GM12878 (cell line): ENCODE measurements at regions of chr1 and their contacts with region 1.

Region 1: DNA sequence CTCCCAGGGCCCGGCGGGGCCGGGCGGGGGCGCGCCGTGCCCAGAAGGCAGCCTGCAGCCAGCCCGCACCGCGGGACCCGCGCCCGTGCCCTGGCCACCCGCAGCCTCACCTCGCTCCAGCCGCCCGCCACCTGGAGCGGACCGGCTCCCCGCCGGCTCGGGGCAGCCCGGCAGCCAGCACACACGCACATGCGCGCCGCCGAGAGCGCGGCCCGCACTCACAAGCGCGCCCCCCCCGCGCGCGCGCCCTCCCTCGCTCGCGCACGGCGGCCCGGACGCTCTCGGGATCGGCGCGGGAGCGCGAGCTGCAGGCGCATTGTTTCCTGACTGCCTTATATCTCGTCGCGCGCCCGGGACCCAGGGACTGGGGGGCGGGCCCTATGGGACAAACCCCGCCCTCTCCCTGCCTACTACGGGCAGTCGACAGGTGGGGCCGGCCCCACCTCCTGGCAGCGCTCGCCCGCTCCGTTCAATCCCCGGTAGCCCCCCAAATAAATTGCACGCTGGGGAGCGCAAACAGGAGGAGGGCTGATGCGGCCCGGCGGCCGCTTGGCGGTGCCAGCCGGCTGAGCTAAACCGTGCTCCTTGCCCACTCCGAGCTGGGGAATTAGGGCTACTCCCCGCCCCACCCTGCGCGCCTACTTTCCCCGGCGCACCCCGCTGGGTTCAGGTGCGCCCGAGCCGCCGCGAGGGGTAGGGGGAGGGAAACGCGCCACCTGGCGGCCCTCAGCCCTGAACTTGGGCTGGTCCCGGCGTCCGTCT is at the start of gene MYCL:
- DNase-seq: no peak
- ATAC-seq: peak; percentile 93
- H3K4me3 ChIP-seq: peak within 1 kb of the TSS; percentile 77
- H3K27ac ChIP-seq: no peak within 1 kb of the TSS
- H3K4me1 ChIP-seq: peaks cover 7% of the 10 kb centered on the region; the same call in 1 of the 2 replicates
- H3K27me3 ChIP-seq: peaks cover 10 to 12% of the 10 kb centered on the region in 2 experiments
- CTCF ChIP-seq: peak; percentile 61 to 84 (median 78)
- EP300 ChIP-seq: no peak
- POLR2A ChIP-seq: peak; percentile 63
- RAD21 ChIP-seq: peak; percentile 69
- polyA plus RNA-seq, gene MYCL: 0.11 to 0.26 TPM

Region 2: GRCh38 chr1:39825432-39825951 is 76.4 kb before region 1 on chr1:
- CTCF ChIA-PET with region 1: interaction called, 10 read pairs
- POLR2A ChIA-PET with region 1: interaction called, 3 read pairs
- RAD21 ChIA-PET with region 1: interaction called, 13 read pairs
- SMC1A ChIA-PET with region 1: interaction called, 8 read pairs
- in situ Hi-C with region 1: no loop called
- intact Hi-C with region 1: no loop called
- DNase-seq: peak; percentile 69
- ATAC-seq: peak; percentile 94
- H3K4me3 ChIP-seq: no peak overlapping the region
- H3K27ac ChIP-seq: peak overlapping the region; percentile 34
- H3K4me1 ChIP-seq: peaks cover 19% of the 10 kb centered on the region
- H3K27me3 ChIP-seq: no peaks in the 10 kb centered on the region
- CTCF ChIP-seq: no peak
- EP300 ChIP-seq: no peak
- POLR2A ChIP-seq: no peak
- RAD21 ChIP-seq: no peak

Region 3: GRCh38 chr1:39845275-39846116 is 56.4 kb before region 1 on chr1:
- CTCF ChIA-PET with region 1: interaction called, 15 read pairs
- POLR2A ChIA-PET with region 1: no interaction called
- RAD21 ChIA-PET with region 1: interaction called, 12 read pairs
- SMC1A ChIA-PET with region 1: interaction called, 9 read pairs
- in situ Hi-C with region 1: no loop called
- intact Hi-C with region 1: no loop called
- DNase-seq: peak; percentile 66
- ATAC-seq: peak; percentile 98
- H3K4me3 ChIP-seq: no peak overlapping the region
- H3K27ac ChIP-seq: peak overlapping the region; percentile 67
- H3K4me1 ChIP-seq: peaks cover 30% of the 10 kb centered on the region
- H3K27me3 ChIP-seq: no peaks in the 10 kb centered on the region
- CTCF ChIP-seq: no peak
- EP300 ChIP-seq: no peak
- POLR2A ChIP-seq: peak; percentile 37; the same call in 1 of the 2 replicates
- RAD21 ChIP-seq: no peak

Region 4: GRCh38 chr1:39882152-39882551 is 19.7 kb before region 1 on chr1:
- CTCF ChIA-PET with region 1: interaction called, 12 read pairs
- POLR2A ChIA-PET with region 1: interaction called, 10 read pairs
- RAD21 ChIA-PET with region 1: interaction called, 9 read pairs
- SMC1A ChIA-PET with region 1: interaction called, 11 read pairs
- in situ Hi-C with region 1: no loop called
- intact Hi-C with region 1: no loop called
- DNase-seq: no peak
- ATAC-seq: no peak
- H3K4me3 ChIP-seq: peak overlapping the region; percentile 75
- H3K27ac ChIP-seq: peak overlapping the region; percentile 48
- H3K4me1 ChIP-seq: peaks cover 4% of the 10 kb centered on the region
- H3K27me3 ChIP-seq: no peaks in the 10 kb centered on the region
- CTCF ChIP-seq: no peak
- EP300 ChIP-seq: no peak
- POLR2A ChIP-seq: no peak
- RAD21 ChIP-seq: no peak

Region 5: GRCh38 chr1:39973503-39974135 is 71.7 kb after region 1 on chr1:
- CTCF ChIA-PET with region 1: interaction called, 16 read pairs
- POLR2A ChIA-PET with region 1: no interaction called
- RAD21 ChIA-PET with region 1: interaction called, 12 read pairs
- SMC1A ChIA-PET with region 1: interaction called, 6 read pairs
- in situ Hi-C with region 1: no loop called
- intact Hi-C with region 1: no loop called
- DNase-seq: no peak
- ATAC-seq: peak; percentile 87
- H3K4me3 ChIP-seq: no peak overlapping the region
- H3K27ac ChIP-seq: no peak overlapping the region
- H3K4me1 ChIP-seq: peaks cover 3% of the 10 kb centered on the region
- H3K27me3 ChIP-seq: no peaks in the 10 kb centered on the region
- CTCF ChIP-seq: peak; percentile 97
- EP300 ChIP-seq: no peak
- POLR2A ChIP-seq: no peak
- RAD21 ChIP-seq: peak; percentile 100

Region 6: GRCh38 chr1:39988618-39989351 is 86.9 kb after region 1 on chr1:
- CTCF ChIA-PET with region 1: no interaction called
- POLR2A ChIA-PET with region 1: no interaction called
- RAD21 ChIA-PET with region 1: no interaction called
- SMC1A ChIA-PET with region 1: no interaction called
- in situ Hi-C with region 1: no loop called
- intact Hi-C with region 1: no loop called
- DNase-seq: no peak
- ATAC-seq: no peak
- H3K4me3 ChIP-seq: no peak overlapping the region
- H3K27ac ChIP-seq: no peak overlapping the region
- H3K4me1 ChIP-seq: peaks cover 11% of the 10 kb centered on the region; the same call in 1 of the 2 replicates
- H3K27me3 ChIP-seq: no peaks in the 10 kb centered on the region
- CTCF ChIP-seq: no peak
- EP300 ChIP-seq: no peak
- POLR2A ChIP-seq: no peak
- RAD21 ChIP-seq: no peak